OCI-LY7 (cell line): ENCODE measurements at regions of chr5 and their contacts with region 1.

Region 1: GRCh38 chr5:157761690-157762621 is 18.4 kb downstream of the LSM11 start:
- DNase-seq: peak; percentile 79
- H3K4me3 ChIP-seq: no peak overlapping the region
- H3K27ac ChIP-seq: no peak overlapping the region
- H3K4me1 ChIP-seq: peaks cover 11% of the 10 kb centered on the region
- CTCF ChIP-seq: peak; percentile 96

Region 2: DNA sequence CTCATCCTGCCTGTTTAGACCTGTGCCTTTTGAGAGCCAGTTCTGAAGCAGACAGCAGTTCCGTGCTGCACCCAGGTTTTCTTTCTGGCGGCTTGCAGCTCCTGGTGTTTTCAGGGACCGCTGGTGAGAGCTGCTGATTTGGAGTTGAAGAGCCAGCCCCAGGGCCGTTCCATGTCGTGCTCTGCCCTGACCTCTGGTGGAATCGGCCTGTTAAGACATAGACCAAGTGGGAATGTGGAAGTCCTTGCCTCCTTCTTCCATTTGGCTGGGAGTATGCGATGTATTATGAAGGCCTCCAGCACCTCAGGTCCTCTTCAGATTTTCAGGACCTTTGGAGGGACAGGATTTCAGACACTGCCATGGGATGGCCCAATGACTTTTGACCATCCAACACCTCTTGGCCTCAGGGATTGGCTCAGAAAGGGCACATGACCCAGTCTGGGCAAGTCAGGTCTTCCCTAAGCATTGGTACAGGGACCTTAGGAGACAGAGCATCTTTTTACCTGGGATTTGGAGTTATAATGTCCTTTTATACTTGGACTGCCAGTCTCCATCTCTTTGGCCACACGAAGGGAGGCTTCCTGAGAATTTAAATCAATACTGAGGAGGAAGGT is 233.1 kb after region 1 on chr5:
- CTCF ChIA-PET with region 1: no interaction called
- POLR2A ChIA-PET with region 1: no interaction called
- intact Hi-C with region 1: loop called (anchors 1 kb)
- DNase-seq: peak; percentile 74
- H3K4me3 ChIP-seq: no peak overlapping the region
- H3K27ac ChIP-seq: no peak overlapping the region
- H3K4me1 ChIP-seq: no peaks in the 10 kb centered on the region
- CTCF ChIP-seq: peak; percentile 90